Natural killer cell (primary cell): ENCODE measurements at regions of chr5 and their contacts with region 1.

Region 1: DNA sequence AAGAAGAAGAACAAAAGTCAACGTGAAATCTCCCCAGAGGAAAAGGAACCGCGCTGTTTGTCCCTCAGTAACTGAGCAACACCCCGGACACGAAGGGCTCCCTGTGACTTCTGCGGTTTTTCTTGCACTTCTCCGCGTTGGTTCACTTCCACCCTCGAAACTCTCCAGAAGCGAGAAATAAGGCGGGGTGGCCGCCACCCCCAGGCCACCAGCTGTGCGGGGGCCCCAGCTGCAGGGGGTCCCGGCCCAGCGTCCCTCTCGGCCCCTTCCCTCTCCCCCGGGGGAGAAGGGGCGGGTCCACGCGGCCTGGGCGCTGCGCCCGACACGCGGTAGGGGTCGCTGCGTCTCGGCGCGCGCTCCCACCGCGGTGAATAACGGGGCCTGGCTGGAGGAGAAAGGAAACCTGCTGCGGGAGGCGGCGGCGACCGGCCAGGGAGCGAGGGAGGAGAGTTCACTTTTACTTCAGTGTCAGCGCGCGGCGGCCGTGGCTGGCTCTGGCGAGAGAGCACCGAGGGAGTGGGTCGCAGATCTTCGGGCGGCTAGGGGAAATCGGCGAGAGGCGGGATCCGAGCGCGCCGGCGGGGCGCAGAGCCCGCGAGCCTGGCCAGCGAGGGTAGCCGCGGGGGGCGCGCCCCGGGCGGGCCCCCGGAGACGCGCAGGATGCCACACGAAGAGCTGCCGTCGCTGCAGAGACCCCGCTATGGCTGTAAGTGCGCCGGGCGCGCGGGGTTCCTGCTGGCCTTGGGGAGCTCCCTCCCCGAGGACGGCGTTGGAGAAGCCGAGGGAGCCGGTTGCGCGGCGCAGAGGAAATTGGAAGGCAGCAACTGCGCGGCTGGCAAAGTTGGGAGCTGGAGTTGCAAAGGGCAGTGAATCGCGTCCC is at the start of gene IQGAP2:
- DNase-seq: peak; percentile 89 to 94
- ATAC-seq: peak; percentile 58 to 81 (median 65)
- H3K4me3 ChIP-seq: peak within 1 kb of the TSS; percentile 94
- H3K4me3 Mint-ChIP-seq: peak within 1 kb of the TSS; percentile 99
- H3K27ac ChIP-seq: peak within 1 kb of the TSS; percentile 96
- H3K27ac Mint-ChIP-seq: peak within 1 kb of the TSS; percentile 98 to 99
- H3K4me1 ChIP-seq: peaks cover 46% of the 10 kb centered on the region
- H3K4me1 Mint-ChIP-seq: peaks cover 70 to 73% of the 10 kb centered on the region in 2 donors
- H3K27me3 ChIP-seq: no peaks in the 10 kb centered on the region
- H3K27me3 Mint-ChIP-seq: no peaks in the 10 kb centered on the region
- CTCF ChIP-seq: peak; percentile 67
- total RNA-seq, gene IQGAP2: 172 to 218 (median 207) TPM

Region 2: GRCh38 chr5:74640450-74640953 is 1762.6 kb before region 1 on chr5 and contains the start of gene ENC1:
- intact Hi-C with region 1: loop called (anchors 10 kb)
- DNase-seq: peak; percentile 80 to 87
- ATAC-seq: peak; percentile 81 to 90 (median 87)
- H3K4me3 ChIP-seq: peak within 1 kb of the TSS; percentile 80
- H3K4me3 Mint-ChIP-seq: peak within 1 kb of the TSS; percentile 91
- H3K27ac ChIP-seq: peak within 1 kb of the TSS; percentile 66
- H3K27ac Mint-ChIP-seq: peak within 1 kb of the TSS; percentile 83 to 91
- H3K4me1 ChIP-seq: peaks cover 27% of the 10 kb centered on the region
- H3K4me1 Mint-ChIP-seq: peaks cover 49 to 55% of the 10 kb centered on the region in 2 donors
- H3K27me3 ChIP-seq: no peaks in the 10 kb centered on the region
- H3K27me3 Mint-ChIP-seq: no peaks in the 10 kb centered on the region
- CTCF ChIP-seq: peak; percentile 31
- total RNA-seq, gene ENC1: 89.6 to 133 (median 99.3) TPM

Region 3: DNA sequence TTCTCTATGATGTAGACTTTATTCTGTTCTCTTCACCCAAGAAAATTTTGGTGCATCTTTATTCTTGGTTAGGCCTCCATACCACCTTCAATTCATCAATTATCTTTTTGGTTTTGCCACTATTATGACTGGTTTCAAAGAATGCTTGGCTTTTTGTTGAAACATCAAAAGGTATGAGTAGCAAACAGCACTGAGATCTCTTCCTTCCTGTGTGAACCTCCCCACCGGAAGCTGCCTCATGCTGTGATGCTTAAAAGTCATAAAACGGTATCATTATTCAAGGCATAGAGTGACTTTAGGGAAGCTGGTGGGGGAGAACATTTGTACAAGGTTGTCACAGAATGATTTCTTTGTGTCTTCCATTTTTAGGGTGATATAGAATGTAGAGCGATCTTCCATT is 70.5 kb after region 1 on chr5:
- intact Hi-C with region 1: loop called (anchors 1 kb)
- DNase-seq: peak; percentile 51 to 87
- ATAC-seq: peak; percentile 91 to 98 (median 96)
- H3K4me3 ChIP-seq: no peak overlapping the region
- H3K4me3 Mint-ChIP-seq: peak overlapping the region; percentile 90
- H3K27ac ChIP-seq: peak overlapping the region; percentile 76
- H3K27ac Mint-ChIP-seq: peak overlapping the region; percentile 96 to 99
- H3K4me1 ChIP-seq: peaks cover 47% of the 10 kb centered on the region
- H3K4me1 Mint-ChIP-seq: peaks cover 76 to 80% of the 10 kb centered on the region in 2 donors
- H3K27me3 ChIP-seq: no peaks in the 10 kb centered on the region
- H3K27me3 Mint-ChIP-seq: no peaks in the 10 kb centered on the region
- CTCF ChIP-seq: no peak

Region 4: GRCh38 chr5:76582230-76583162 is 179.4 kb after region 1 on chr5:
- intact Hi-C with region 1: loop called (anchors 1 kb)
- DNase-seq: peak in 1 of 2 donors; percentile 12
- ATAC-seq: peak in 1 of 3 donors; percentile 42
- H3K4me3 ChIP-seq: no peak overlapping the region
- H3K4me3 Mint-ChIP-seq: no peak overlapping the region
- H3K27ac ChIP-seq: peak overlapping the region; percentile 14
- H3K27ac Mint-ChIP-seq: peak overlapping the region; percentile 75 to 82
- H3K4me1 ChIP-seq: peaks cover 6% of the 10 kb centered on the region
- H3K4me1 Mint-ChIP-seq: peaks cover 20 to 33% of the 10 kb centered on the region in 2 donors
- H3K27me3 ChIP-seq: no peaks in the 10 kb centered on the region
- H3K27me3 Mint-ChIP-seq: no peaks in the 10 kb centered on the region
- CTCF ChIP-seq: no peak

Region 5: DNA sequence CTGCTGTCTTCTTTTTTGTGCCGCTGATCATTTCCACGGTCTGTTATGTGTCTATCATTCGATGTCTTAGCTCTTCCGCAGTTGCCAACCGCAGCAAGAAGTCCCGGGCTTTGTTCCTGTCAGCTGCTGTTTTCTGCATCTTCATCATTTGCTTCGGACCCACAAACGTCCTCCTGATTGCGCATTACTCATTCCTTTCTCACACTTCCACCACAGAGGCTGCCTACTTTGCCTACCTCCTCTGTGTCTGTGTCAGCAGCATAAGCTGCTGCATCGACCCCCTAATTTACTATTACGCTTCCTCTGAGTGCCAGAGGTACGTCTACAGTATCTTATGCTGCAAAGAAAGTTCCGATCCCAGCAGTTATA is 329.9 kb after region 1 on chr5:
- intact Hi-C with region 1: loop called (anchors 2 kb)
- DNase-seq: peak; percentile 54 to 87
- ATAC-seq: peak; percentile 74 to 85 (median 83)
- H3K4me3 ChIP-seq: peak overlapping the region; percentile 9
- H3K4me3 Mint-ChIP-seq: peak overlapping the region; percentile 72
- H3K27ac ChIP-seq: peak overlapping the region; percentile 82
- H3K27ac Mint-ChIP-seq: peak overlapping the region; percentile 90 to 95
- H3K4me1 ChIP-seq: peaks cover 38% of the 10 kb centered on the region
- H3K4me1 Mint-ChIP-seq: peaks cover 62 to 63% of the 10 kb centered on the region in 2 donors
- H3K27me3 ChIP-seq: no peaks in the 10 kb centered on the region
- H3K27me3 Mint-ChIP-seq: no peaks in the 10 kb centered on the region
- CTCF ChIP-seq: no peak